Activated CD4-positive, alpha-beta T cell treated with anti-CD3 and anti-CD28 coated beads for 36 hours (primary cell): ENCODE measurements at regions of chr19 and their contacts with region 1.

Region 1: GRCh38 chr19:41263850-41264580 is at the start of gene HNRNPUL1:
- DNase-seq: peak; percentile 99
- ATAC-seq: peak; percentile 70
- H3K4me3 Mint-ChIP-seq: peak within 1 kb of the TSS; percentile 95
- H3K27ac Mint-ChIP-seq: peak within 1 kb of the TSS; percentile 100
- H3K4me1 Mint-ChIP-seq: peaks cover 34% of the 10 kb centered on the region
- H3K27me3 Mint-ChIP-seq: no peaks in the 10 kb centered on the region
- total RNA-seq, gene HNRNPUL1: 263 to 312 TPM

Region 2: DNA sequence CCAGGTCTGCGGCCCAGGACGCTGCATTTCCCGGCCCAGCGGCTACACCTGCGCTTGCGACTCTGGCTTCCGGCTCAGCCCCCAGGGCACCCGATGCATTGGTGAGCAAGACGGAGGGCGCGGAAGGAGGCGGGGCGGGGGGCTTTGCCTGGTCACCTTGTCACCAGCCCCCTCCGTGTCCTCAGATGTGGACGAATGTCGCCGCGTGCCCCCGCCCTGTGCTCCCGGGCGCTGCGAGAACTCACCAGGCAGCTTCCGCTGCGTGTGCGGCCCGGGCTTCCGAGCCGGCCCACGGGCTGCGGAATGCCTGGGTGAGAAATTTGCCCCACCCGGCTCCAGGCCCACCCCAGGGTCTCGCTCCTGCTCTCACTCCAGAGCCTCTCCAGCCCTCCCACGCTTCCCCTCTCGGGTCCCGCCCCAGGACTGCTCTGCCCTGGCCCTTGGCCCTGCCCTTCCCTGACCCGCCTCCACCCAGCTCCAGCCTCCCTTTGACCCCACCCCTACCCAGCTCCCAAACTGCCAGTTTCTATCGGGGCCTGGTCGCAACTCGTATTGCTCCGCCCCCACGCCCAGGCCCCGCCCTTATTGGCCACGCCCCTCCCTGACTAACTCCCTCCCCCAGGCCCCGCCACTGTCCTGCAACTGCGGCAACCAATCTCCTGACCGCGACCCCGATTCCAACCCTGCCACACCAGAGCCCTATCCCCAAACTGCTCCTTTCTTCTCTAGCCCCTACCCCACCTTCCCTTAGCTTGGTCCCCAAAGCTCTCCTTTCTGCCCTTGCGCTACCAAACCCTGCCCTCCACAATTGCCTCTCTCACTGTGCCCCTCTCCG is 654.2 kb before region 1 on chr19:
- CTCF ChIA-PET with region 1: no interaction called
- POLR2A ChIA-PET with region 1: no interaction called
- intact Hi-C with region 1: loop called in 1 of 2 experiments (anchors 5 kb)
- DNase-seq: peak; percentile 97
- ATAC-seq: peak; percentile 54
- H3K4me3 Mint-ChIP-seq: peak overlapping the region; percentile 69
- H3K27ac Mint-ChIP-seq: peak overlapping the region; percentile 97
- H3K4me1 Mint-ChIP-seq: peaks cover 63% of the 10 kb centered on the region
- H3K27me3 Mint-ChIP-seq: no peaks in the 10 kb centered on the region

Region 3: DNA sequence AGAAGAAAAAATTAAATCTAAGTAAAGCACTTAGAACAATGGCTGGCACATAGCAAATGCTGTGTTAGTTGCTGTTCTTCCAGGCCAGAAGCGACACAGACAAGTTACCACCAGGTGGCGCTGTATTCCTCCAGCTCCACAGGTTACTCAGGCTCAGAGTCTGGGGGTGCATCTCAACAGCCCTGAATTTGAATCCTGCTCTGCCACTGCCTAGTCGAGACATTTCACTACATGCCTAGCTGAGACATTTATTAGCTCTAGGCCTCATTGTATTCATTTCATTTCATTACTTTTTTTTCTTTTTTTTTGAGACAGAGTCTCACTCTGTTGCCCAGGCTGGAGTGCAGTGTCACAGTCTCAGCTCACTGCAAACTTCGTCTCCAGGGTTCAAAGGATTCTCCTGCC is 289.4 kb before region 1 on chr19:
- CTCF ChIA-PET with region 1: no interaction called
- POLR2A ChIA-PET with region 1: no interaction called
- intact Hi-C with region 1: loop called in 1 of 2 experiments (anchors 5 kb)
- DNase-seq: peak; percentile 88
- ATAC-seq: peak; percentile 68
- H3K4me3 Mint-ChIP-seq: no peak overlapping the region
- H3K27ac Mint-ChIP-seq: no peak overlapping the region
- H3K4me1 Mint-ChIP-seq: peaks cover 20% of the 10 kb centered on the region
- H3K27me3 Mint-ChIP-seq: peaks cover 9% of the 10 kb centered on the region

Region 4: DNA sequence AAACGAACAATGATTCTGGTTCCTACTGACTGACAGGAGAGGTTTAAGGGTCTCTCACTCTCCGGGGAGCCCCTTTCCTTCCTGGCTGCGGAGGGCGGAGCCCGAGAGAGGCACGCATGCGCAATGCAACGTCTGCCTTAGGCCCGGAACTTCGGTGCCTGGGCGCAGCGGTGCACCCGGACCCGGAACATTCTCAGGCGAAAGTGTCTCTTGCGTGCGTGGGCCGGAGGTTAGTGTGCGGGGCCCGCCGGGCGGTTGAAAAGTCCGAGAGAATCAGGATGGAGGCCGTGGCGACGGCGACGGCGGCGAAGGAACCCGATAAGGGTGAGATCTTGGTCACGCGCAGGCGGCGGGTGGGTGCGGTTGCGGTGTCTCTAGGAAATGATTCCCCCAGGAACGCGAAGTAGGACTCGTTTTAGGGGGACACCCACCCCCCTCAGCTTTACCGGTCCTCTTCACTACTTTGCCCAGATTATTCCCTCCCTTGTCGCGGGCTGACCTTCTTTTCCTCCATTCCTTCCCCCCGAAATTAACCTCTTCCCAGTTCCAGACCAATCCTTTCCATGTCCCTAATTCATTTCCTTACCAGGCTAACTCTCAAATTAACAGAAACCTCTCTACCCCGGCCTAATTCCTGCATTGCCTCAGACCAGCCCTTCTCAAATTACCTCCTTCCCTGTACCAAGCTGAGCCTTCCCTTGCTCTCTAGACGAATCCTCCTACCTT is 46.2 kb after region 1 on chr19 and contains the start of gene CCDC97:
- CTCF ChIA-PET with region 1: interaction called, 30 read pairs
- POLR2A ChIA-PET with region 1: interaction called, 22 read pairs
- intact Hi-C with region 1: loop called (anchors 1 kb)
- DNase-seq: peak; percentile 92
- ATAC-seq: peak; percentile 66
- H3K4me3 Mint-ChIP-seq: peak within 1 kb of the TSS; percentile 91
- H3K27ac Mint-ChIP-seq: peak within 1 kb of the TSS; percentile 97
- H3K4me1 Mint-ChIP-seq: peaks cover 63% of the 10 kb centered on the region
- H3K27me3 Mint-ChIP-seq: no peaks in the 10 kb centered on the region
- total RNA-seq, gene CCDC97: 21.2 to 21.4 TPM

Region 5: DNA sequence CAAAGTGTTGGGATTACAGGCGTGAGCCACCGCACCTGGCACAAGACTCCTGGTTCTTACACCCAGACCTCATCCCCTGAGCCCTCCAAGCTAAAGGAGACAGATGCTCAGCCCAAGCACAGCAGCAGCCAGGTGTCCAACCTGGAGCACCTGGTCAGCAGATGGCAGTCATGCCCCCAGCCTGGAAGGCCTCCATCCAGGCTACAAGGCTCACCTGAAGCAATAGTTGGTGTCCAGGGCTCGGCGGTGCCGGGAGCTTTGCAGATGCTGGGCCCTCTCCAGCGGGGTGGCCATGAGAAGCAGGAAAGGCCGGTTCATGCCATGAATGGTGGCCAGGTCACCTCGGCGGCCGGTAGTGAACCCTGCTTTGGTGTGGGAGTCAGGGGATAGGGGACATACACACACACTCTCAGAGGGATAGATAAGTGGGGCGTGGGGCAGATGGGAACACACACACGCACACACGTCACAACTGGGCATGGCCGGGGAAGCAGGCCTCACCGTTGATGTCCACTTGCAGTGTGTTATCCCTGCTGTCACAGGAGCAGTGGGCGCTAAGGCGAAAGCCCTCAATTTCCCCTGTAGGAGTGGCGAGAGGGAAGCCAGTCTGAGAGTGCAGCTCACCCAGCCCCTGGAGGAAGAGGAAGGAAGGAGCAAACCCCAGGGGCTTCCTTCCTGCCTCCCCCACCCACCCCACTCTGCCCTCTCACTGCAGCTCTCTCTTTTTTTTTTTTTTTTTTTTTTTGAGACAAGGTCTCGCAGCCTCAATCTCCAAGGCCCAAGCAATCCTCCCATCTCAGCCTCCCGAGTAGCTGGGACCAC is 77.9 kb after region 1 on chr19:
- CTCF ChIA-PET with region 1: no interaction called
- POLR2A ChIA-PET with region 1: no interaction called
- intact Hi-C with region 1: no loop called
- DNase-seq: no peak
- ATAC-seq: no peak
- H3K4me3 Mint-ChIP-seq: no peak overlapping the region
- H3K27ac Mint-ChIP-seq: no peak overlapping the region
- H3K4me1 Mint-ChIP-seq: peaks cover 30% of the 10 kb centered on the region
- H3K27me3 Mint-ChIP-seq: no peaks in the 10 kb centered on the region

Region 6: DNA sequence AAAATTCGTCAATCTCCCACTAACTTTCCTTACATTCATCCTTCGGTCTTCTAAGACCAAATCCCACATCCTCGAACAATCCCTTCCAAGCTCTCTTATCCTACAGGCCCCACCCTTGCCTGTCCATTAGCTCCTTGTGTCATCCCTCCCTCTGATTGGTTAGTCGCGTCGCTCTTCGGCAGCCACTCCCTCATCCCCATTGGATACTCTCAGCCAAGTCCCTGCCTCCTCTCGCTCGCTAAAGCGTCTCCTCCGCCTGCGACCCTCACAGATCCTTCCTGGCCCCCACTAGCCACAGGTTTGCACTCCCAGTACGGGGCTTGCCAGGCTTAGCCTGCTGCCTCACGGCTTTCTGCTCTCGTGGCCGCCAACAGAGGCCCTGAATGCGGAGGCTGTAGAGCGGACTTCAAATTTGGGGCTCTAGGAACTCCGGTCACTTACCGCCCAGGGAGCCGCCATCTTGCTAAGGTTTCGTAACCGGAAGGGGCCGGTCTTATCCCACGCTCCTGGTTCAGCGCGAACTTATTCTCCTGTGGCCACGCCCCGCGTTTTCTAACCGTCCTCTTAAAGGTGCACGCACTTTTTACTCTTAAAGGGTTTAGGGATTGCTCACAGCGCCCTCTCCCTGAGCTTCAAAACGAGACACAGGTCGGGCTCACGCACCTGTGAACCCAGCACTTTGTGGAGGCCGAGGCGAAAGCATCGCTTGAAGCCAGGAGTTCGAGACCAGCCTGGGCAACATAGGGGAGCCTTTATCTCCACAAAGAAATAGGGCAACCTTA is 175.6 kb after region 1 on chr19 and contains the start of gene DMAC2:
- CTCF ChIA-PET with region 1: interaction called, 5 read pairs
- POLR2A ChIA-PET with region 1: interaction called, 7 read pairs
- intact Hi-C with region 1: loop called in 1 of 2 experiments (anchors 1 kb)
- DNase-seq: peak; percentile 98
- ATAC-seq: peak; percentile 97
- H3K4me3 Mint-ChIP-seq: no peak within 1 kb of the TSS
- H3K27ac Mint-ChIP-seq: peak within 1 kb of the TSS; percentile 2
- H3K4me1 Mint-ChIP-seq: peaks cover 18% of the 10 kb centered on the region
- H3K27me3 Mint-ChIP-seq: peaks cover 2% of the 10 kb centered on the region
- total RNA-seq, gene DMAC2: 52.5 to 66.3 TPM

Region 7: GRCh38 chr19:41883821-41884733 is 620.1 kb after region 1 on chr19:
- CTCF ChIA-PET with region 1: no interaction called
- POLR2A ChIA-PET with region 1: no interaction called
- intact Hi-C with region 1: loop called in 1 of 2 experiments (anchors 2 kb)
- DNase-seq: peak; percentile 94
- ATAC-seq: peak; percentile 75
- H3K4me3 Mint-ChIP-seq: peak overlapping the region; percentile 68
- H3K27ac Mint-ChIP-seq: peak overlapping the region; percentile 96
- H3K4me1 Mint-ChIP-seq: peaks cover 54% of the 10 kb centered on the region
- H3K27me3 Mint-ChIP-seq: no peaks in the 10 kb centered on the region